T-cell (primary cell): ENCODE measurements at regions of chr18 and their contacts with region 1.

Region 1: DNA sequence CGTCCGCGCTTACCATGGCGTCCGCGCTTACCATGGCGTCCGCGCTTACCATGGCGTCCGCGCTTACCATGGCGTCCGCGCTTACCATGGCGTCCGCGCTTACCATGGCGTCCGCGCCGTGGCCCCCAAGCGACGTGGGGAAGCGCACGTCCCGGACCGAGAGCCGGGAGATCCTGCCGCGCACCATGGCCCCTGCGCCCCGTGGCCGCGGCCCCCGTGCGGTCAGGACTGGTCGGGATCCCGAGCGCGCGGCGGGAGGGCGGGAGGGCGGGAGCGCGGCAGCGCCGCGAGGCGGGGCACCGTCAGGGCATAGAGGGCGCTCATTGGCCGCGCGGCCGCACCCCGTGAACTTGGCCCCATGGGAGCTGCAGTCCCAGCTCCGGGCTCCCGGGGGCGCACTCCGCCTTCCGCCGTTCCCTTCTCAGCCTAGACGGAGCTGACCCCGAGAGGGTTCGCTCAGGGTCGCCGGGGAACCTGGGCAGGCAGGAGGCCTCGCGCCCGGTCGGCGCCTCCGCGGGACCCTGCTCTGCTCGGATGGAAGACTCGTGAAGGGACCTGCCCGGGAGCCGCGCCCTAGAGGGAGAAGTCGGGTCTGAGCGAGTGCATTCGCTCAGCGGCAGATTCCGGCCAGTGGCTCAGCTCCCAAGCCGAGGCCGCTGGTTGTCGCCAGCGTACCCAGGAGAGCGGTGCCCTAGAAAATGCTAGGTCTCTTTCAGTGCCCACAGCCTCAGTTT is at the start of gene ENOSF1:
- DNase-seq: peak; percentile 39 to 88 (median 73)
- ATAC-seq: peak; percentile 71 to 91 (median 89)
- H3K4me3 ChIP-seq: peak within 1 kb of the TSS; percentile 77 to 87
- H3K4me3 Mint-ChIP-seq: peak within 1 kb of the TSS; percentile 83 to 91 (median 84)
- H3K27ac ChIP-seq: peak within 1 kb of the TSS; percentile 92
- H3K27ac Mint-ChIP-seq: peak within 1 kb of the TSS; percentile 87 to 90
- H3K4me1 ChIP-seq: peaks cover 4 to 33% of the 10 kb centered on the region in 2 experiments
- H3K4me1 Mint-ChIP-seq: peaks cover 26 to 43% (median 39%) of the 10 kb centered on the region in 3 donors
- H3K27me3 ChIP-seq: no peaks in the 10 kb centered on the region
- H3K27me3 Mint-ChIP-seq: no peaks in the 10 kb centered on the region
- total RNA-seq, gene ENOSF1: 70.8 to 97.6 (median 75.8) TPM

Region 2: GRCh38 chr18:617970-618504 is 94.5 kb before region 1 on chr18:
- CTCF ChIA-PET with region 1: interaction called in 1 of 2 experiments, 10 read pairs
- POLR2A ChIA-PET with region 1: interaction called in 1 of 2 experiments, 3 read pairs
- DNase-seq: no peak
- ATAC-seq: no peak
- H3K4me3 ChIP-seq: no peak overlapping the region
- H3K4me3 Mint-ChIP-seq: no peak overlapping the region
- H3K27ac ChIP-seq: no peak overlapping the region
- H3K27ac Mint-ChIP-seq: no peak overlapping the region
- H3K4me1 ChIP-seq: no peaks in the 10 kb centered on the region
- H3K4me1 Mint-ChIP-seq: no peaks in the 10 kb centered on the region
- H3K27me3 ChIP-seq: peaks cover 2 to 4% of the 10 kb centered on the region in 2 experiments
- H3K27me3 Mint-ChIP-seq: peaks cover 3 to 6% of the 10 kb centered on the region in 2 donors

Region 3: GRCh38 chr18:812376-813171 is 100.0 kb after region 1 on chr18:
- CTCF ChIA-PET with region 1: interaction called in 1 of 2 experiments, 10 read pairs
- POLR2A ChIA-PET with region 1: interaction called in 1 of 2 experiments, 3 read pairs
- DNase-seq: peak; percentile 63 to 85 (median 75)
- ATAC-seq: peak; percentile 65 to 75 (median 70)
- H3K4me3 ChIP-seq: peak overlapping the region; percentile 91 to 92
- H3K4me3 Mint-ChIP-seq: peak overlapping the region; percentile 93 to 95 (median 94)
- H3K27ac ChIP-seq: peak overlapping the region; percentile 96
- H3K27ac Mint-ChIP-seq: peak overlapping the region; percentile 97 to 98
- H3K4me1 ChIP-seq: peaks cover 40 to 53% of the 10 kb centered on the region in 2 experiments
- H3K4me1 Mint-ChIP-seq: peaks cover 65 to 70% (median 68%) of the 10 kb centered on the region in 3 donors
- H3K27me3 ChIP-seq: peaks cover 0 to 4% of the 10 kb centered on the region in 2 experiments
- H3K27me3 Mint-ChIP-seq: peaks cover 0 to 2% of the 10 kb centered on the region in 2 donors